Adrenal gland (tissue), 19 donors: ENCODE measurements at regions of chr2 and their contacts with region 1.

Region 1: DNA sequence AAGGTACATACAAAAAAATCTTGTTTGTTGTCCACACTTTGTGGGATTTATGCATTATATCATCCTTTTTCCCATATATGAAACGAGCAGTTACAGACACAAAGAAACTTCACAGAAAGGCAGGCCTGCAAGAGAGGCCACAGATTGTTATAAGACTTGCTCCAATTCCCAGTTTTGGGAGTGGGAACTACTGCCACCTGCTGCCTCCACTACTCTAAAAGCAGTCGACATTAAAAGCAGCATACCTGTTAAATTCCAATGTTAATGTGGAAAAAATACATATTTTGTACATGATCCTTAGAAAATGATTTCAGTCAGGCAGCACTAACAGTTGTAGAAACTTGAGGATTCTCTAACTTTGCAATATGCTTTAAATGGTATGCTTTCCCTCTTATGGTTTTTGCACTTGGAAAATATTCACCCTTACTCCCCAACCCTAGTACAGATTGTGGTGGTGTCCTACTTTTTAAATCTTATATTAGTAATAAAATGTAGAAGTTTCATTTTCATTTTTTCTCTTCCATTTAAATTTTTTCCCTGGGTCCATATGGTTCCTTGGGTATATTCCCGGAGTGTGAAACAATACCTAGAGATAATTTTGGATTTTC is 37.9 kb downstream of the SLC38A11 start:
- DNase-seq: peak; percentile 59 to 84 (median 72)
- H3K4me3 ChIP-seq: no peak overlapping the region
- H3K27ac ChIP-seq: no peak overlapping the region
- H3K4me1 ChIP-seq: peaks cover 4 to 21% of the 10 kb centered on the region in 2 donors
- H3K27me3 ChIP-seq: no peaks in the 10 kb centered on the region
- CTCF ChIP-seq: peak in 5 of 6 experiments; percentile 62 to 75 (median 68)
- POLR2A ChIP-seq: no peak

Region 2: GRCh38 chr2:164737612-164738081 is 179.8 kb before region 1 on chr2:
- intact Hi-C with region 1: loop called (anchors 5 kb)
- DNase-seq: peak; percentile 57 to 82 (median 70)
- H3K4me3 ChIP-seq: no peak overlapping the region
- H3K27ac ChIP-seq: peak overlapping the region in 2 of 5 donors; percentile 38 to 44
- H3K4me1 ChIP-seq: peaks cover 44 to 48% of the 10 kb centered on the region in 2 donors
- H3K27me3 ChIP-seq: no peaks in the 10 kb centered on the region
- CTCF ChIP-seq: peak; percentile 69 to 85 (median 75)
- POLR2A ChIP-seq: no peak

Region 3: GRCh38 chr2:164841719-164842623 is 75.4 kb before region 1 on chr2 and contains the start of gene COBLL1:
- intact Hi-C with region 1: loop called in 1 of 2 experiments (anchors 10 kb)
- DNase-seq: peak; percentile 78 to 89 (median 86)
- H3K4me3 ChIP-seq: peak within 1 kb of the TSS; percentile 78 to 98 (median 94)
- H3K27ac ChIP-seq: peak within 1 kb of the TSS; percentile 91 to 98 (median 95)
- H3K4me1 ChIP-seq: peaks cover 14 to 28% of the 10 kb centered on the region in 2 donors
- H3K27me3 ChIP-seq: no peaks in the 10 kb centered on the region
- CTCF ChIP-seq: peak; percentile 75 to 91 (median 89)
- POLR2A ChIP-seq: peak; percentile 31 to 76
- total RNA-seq, gene COBLL1: 50.1 to 365 (median 233) TPM